ENCODE measurements at regions of chr5 and their contacts with region 1.

Region 1: DNA sequence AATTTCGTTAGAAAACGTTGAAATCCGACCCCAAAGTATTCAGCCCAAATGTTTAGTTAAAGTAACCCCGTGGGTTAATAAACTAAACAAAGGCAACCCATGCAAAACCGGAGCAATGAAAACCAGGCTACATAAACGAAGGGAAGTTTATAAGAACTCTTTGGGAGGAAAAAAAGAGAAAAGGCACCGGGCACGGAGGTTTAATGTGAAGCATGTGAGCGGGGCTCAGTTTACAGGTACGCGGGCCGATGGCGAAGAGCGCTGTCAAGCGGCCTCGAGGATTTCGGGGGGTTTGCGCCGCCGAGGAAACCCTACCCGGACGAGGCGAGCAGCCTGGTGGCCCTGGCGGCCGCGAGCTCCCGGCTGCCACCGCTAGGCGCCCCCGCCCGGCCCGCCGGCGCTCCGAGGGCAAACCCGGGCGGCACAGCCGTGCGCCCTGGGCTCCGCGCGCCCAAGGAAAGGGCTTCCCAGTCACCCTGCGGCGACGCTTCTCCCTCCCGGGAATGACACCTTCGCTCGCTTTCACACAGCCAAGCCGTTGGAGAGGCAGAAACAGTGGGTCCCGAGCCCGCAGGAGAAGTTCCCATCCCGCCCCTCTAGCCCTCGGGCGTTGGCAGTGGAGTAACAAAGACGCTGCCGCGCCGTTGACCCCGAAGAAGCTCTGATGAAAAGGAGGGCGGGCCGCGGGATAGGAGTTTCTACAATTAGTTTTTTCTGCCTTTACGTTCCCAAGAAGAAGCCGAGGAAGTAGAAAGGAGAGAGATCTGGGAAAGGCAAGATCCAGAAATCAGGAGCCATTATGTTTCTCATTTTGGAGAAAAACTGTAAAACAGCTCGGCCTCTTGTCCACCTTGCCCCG is 126.0 kb downstream of the TMEM174 start:
- DNase-seq: no peak
- H3K4me3 Mint-ChIP-seq: no peak overlapping the region
- H3K27ac Mint-ChIP-seq: no peak overlapping the region
- H3K4me1 Mint-ChIP-seq: peaks cover 22% of the 10 kb centered on the region
- H3K27me3 Mint-ChIP-seq: peaks cover 87% of the 10 kb centered on the region

Region 2: DNA sequence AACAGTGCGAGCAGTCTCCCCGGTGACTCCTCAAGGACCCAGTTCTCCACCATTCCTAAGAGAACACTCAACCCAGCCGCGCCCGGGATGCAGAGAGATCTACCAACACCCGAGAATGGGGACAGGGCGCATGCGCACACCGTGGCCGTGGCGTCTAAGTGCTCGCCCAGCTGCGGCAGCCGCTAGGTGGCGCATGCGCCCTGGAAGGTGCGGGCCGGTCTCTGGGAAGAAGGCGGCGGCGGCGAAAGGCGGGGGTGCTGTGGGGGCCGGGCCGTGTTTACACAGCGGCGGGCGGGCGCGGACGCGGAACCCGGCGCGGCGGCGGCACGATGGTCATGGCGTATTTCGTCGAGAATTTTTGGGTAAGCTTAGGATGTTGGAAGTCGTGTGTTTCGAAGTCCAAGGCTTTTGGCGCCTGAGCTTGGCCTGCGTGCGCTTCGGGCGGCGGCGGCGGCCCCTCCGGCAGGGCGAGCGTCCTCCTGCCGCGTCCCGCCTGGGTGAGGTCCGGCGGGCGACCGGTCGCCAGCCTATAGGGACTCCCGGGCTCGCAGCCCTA is 343.2 kb before region 1 on chr5 and contains the start of gene FCHO2:
- CTCF ChIA-PET with region 1: no interaction called
- intact Hi-C with region 1: loop called (anchors 5 kb)
- DNase-seq: peak; percentile 95
- H3K4me3 Mint-ChIP-seq: peak within 1 kb of the TSS; percentile 91
- H3K27ac Mint-ChIP-seq: peak within 1 kb of the TSS; percentile 63
- H3K4me1 Mint-ChIP-seq: peaks cover 10% of the 10 kb centered on the region
- H3K27me3 Mint-ChIP-seq: peaks cover 47% of the 10 kb centered on the region
- total RNA-seq, gene FCHO2: 0.54 to 0.93 TPM

Region 3: GRCh38 chr5:73081093-73081492 is 217.9 kb before region 1 on chr5:
- CTCF ChIA-PET with region 1: no interaction called
- intact Hi-C with region 1: loop called (anchors 5 kb)
- DNase-seq: no peak
- H3K4me3 Mint-ChIP-seq: no peak overlapping the region
- H3K27ac Mint-ChIP-seq: no peak overlapping the region
- H3K4me1 Mint-ChIP-seq: no peaks in the 10 kb centered on the region
- H3K27me3 Mint-ChIP-seq: peaks cover 11% of the 10 kb centered on the region

Region 4: DNA sequence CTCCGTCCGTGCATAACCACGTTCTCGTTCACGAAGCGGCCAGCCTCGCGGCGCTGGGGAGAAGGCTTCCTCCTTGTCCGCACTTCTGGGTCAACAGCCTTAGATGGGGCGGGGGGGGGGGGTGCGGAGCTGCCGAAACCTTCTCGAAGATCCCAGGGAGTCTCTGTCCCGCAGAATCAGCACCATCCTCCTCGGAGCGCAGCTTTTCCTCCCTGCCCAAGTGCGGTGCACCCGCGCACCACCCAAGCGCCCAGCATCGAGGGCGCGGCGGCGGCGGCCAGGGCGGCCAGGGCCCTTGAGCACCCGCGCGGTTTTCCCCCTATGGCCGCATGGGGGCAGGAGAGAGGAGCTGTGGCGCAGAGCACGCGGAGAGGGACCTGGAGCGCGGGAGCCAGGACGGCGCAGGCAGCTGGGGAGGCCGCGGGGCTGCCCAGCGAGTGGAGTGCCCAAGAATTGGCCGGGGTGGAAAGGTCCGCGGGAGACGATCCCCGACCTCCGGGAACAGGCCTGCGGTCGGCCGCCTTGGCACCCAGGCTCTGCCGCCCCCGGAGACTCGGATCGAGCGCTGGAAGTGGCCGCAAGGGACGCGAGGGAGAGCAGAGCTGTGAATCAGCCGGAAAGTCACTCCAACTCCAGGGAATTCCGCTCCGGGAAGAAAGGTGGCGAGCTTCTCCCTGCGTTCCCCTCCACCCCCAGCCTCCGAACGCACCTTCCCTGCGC is 83.0 kb before region 1 on chr5:
- CTCF ChIA-PET with region 1: interaction called, 4 read pairs
- intact Hi-C with region 1: loop called (anchors 2 kb)
- DNase-seq: peak; percentile 77
- H3K4me3 Mint-ChIP-seq: no peak overlapping the region
- H3K27ac Mint-ChIP-seq: no peak overlapping the region
- H3K4me1 Mint-ChIP-seq: peaks cover 17% of the 10 kb centered on the region
- H3K27me3 Mint-ChIP-seq: peaks cover 84% of the 10 kb centered on the region

Region 5: GRCh38 chr5:73233347-73234200 is 65.4 kb before region 1 on chr5:
- CTCF ChIA-PET with region 1: interaction called, 4 read pairs
- intact Hi-C with region 1: loop called (anchors 5 kb)
- DNase-seq: peak; percentile 34
- H3K4me3 Mint-ChIP-seq: peak overlapping the region; percentile 29
- H3K27ac Mint-ChIP-seq: no peak overlapping the region
- H3K4me1 Mint-ChIP-seq: peaks cover 24% of the 10 kb centered on the region
- H3K27me3 Mint-ChIP-seq: peaks cover 70% of the 10 kb centered on the region

Region 6: DNA sequence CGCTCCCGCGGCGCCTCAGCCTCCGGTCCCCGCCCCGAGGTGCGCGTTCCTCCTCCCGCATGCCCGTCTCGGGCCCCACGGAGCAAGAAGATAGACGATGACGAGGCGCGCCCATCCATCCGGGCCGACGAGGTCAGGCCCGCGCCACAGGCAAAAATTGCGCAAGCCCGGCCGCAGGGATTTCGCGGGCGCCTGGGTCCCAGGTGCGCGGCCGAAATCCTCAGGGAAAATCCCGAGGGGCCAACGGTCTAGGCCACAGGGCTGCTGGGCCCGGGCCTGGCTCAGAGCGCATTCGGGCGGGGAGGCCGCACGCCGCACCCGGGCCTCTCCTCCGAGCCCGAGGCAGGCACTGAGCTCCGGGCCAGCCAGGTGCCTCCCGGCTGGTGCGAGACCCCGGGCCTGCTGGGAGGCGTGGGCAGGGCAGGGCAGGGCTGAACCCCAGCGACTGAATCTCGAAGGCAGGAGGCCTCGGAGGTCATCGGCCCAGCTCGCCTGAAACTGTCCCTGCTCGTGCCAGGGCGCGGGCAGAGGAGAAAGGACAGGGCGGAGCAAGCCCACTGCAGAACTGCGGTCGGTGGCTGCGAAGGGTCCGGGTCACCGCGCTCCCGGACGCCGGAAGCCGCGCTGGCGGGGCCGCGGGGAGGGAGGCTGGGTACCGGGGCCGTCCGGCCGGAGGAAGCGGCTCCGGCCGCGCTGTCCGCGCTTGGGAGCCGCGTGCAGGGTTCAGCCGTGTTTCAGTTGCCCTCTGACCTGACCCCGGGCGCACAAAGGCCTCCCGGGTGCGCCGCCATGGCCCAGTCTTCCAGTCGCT is 82.8 kb after region 1 on chr5:
- CTCF ChIA-PET with region 1: no interaction called
- intact Hi-C with region 1: loop called (anchors 5 kb)
- DNase-seq: no peak
- H3K4me3 Mint-ChIP-seq: no peak overlapping the region
- H3K27ac Mint-ChIP-seq: no peak overlapping the region
- H3K4me1 Mint-ChIP-seq: peaks cover 17% of the 10 kb centered on the region
- H3K27me3 Mint-ChIP-seq: peaks cover 66% of the 10 kb centered on the region